ENCODE measurements at regions of chr16 and their contacts with region 1.

Region 1: DNA sequence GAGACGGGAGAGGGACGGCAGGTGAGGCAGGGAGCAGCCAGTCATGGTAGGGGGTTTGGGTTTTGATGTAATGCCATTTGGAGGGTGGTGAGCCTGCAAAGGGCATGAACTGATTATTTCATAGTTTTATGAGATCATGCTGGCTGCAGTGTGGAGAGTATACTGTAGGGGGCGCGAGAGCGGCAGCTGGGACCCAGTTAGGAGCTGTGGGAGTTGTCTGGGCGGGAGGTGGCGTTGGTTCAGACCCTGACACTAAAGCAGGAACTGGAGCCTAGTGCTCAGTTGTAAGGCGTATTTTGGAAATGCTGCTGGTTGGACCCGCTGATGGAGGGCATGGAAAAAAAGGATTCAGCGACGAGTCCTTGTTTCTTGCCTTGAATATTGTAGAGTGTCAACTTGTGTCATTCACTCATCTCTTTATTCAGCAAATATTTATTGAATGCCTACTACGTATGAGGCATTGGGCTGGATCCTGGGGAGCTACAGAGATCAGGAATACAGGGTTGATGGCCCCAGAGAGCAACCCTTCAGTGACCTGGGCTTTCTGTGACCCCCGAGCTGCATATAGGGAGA is 23.7 kb upstream of the KDM8 start:
- DNase-seq: peak; percentile 38 to 67
- H3K4me3 ChIP-seq: no peak overlapping the region
- H3K27ac ChIP-seq: no peak overlapping the region
- H3K4me1 ChIP-seq: no peaks in the 10 kb centered on the region
- H3K27me3 ChIP-seq: no peaks in the 10 kb centered on the region
- CTCF ChIP-seq: peak; percentile 73 to 78 (median 76)
- POLR2A ChIP-seq: no peak

Region 2: GRCh38 chr16:27113341-27113841 is 66.2 kb before region 1 on chr16:
- intact Hi-C with region 1: loop called (anchors 2 kb)
- DNase-seq: peak in 1 of 2 donors; percentile 30
- H3K4me3 ChIP-seq: no peak overlapping the region
- H3K27ac ChIP-seq: no peak overlapping the region
- H3K4me1 ChIP-seq: no peaks in the 10 kb centered on the region
- H3K27me3 ChIP-seq: no peaks in the 10 kb centered on the region
- CTCF ChIP-seq: no peak
- POLR2A ChIP-seq: no peak

Region 3: DNA sequence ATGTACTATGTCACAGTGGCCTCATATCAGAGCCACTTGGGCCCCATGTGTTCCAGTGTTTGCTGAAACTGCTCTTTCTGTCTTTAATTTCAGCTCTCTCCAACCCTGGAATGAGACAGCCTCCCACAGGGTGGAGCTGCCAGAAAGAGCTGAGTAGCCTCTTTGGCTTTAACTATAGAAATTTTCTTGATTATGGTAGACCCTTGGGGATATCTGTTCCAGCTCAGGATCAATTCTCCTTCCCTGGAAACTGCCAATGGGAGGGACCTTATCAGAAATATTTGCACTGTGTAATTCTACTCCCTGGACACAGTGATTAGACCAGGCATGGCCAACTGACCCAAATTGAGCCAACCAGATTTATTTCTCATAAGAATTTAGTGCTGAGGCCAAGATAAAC is 15.2 kb before region 1 on chr16:
- intact Hi-C with region 1: no loop called
- DNase-seq: no peak
- H3K4me3 ChIP-seq: no peak overlapping the region
- H3K27ac ChIP-seq: no peak overlapping the region
- H3K4me1 ChIP-seq: no peaks in the 10 kb centered on the region
- H3K27me3 ChIP-seq: no peaks in the 10 kb centered on the region
- CTCF ChIP-seq: no peak
- POLR2A ChIP-seq: no peak

Region 4: GRCh38 chr16:27217256-27217655 is 37.7 kb after region 1 on chr16:
- intact Hi-C with region 1: no loop called
- DNase-seq: no peak
- H3K4me3 ChIP-seq: no peak overlapping the region
- H3K27ac ChIP-seq: no peak overlapping the region
- H3K4me1 ChIP-seq: no peaks in the 10 kb centered on the region
- H3K27me3 ChIP-seq: no peaks in the 10 kb centered on the region
- CTCF ChIP-seq: no peak
- POLR2A ChIP-seq: no peak

Region 5: GRCh38 chr16:27374804-27375425 is 195.3 kb after region 1 on chr16:
- intact Hi-C with region 1: loop called (anchors 10 kb)
- DNase-seq: peak in 1 of 2 donors; percentile 35
- H3K4me3 ChIP-seq: no peak overlapping the region
- H3K27ac ChIP-seq: peak overlapping the region in 1 of 2 donors; percentile 53
- H3K4me1 ChIP-seq: no peaks in the 10 kb centered on the region
- H3K27me3 ChIP-seq: no peaks in the 10 kb centered on the region
- CTCF ChIP-seq: peak; percentile 13 to 32 (median 30)
- POLR2A ChIP-seq: no peak

Measured in breast epithelium (tissue), 4 donors.